ENCODE measurements at regions of chr12 and their contacts with region 1.

Region 1: GRCh38 chr12:56117778-56118687 is at the start of gene ZC3H10:
- DNase-seq: peak; percentile 99
- H3K4me3 Mint-ChIP-seq: peak within 1 kb of the TSS; percentile 99
- H3K27ac Mint-ChIP-seq: peak within 1 kb of the TSS; percentile 100
- H3K4me1 Mint-ChIP-seq: peaks cover 29% of the 10 kb centered on the region
- H3K27me3 Mint-ChIP-seq: no peaks in the 10 kb centered on the region
- total RNA-seq, gene ZC3H10: 5.1 to 7.2 TPM

Region 2: DNA sequence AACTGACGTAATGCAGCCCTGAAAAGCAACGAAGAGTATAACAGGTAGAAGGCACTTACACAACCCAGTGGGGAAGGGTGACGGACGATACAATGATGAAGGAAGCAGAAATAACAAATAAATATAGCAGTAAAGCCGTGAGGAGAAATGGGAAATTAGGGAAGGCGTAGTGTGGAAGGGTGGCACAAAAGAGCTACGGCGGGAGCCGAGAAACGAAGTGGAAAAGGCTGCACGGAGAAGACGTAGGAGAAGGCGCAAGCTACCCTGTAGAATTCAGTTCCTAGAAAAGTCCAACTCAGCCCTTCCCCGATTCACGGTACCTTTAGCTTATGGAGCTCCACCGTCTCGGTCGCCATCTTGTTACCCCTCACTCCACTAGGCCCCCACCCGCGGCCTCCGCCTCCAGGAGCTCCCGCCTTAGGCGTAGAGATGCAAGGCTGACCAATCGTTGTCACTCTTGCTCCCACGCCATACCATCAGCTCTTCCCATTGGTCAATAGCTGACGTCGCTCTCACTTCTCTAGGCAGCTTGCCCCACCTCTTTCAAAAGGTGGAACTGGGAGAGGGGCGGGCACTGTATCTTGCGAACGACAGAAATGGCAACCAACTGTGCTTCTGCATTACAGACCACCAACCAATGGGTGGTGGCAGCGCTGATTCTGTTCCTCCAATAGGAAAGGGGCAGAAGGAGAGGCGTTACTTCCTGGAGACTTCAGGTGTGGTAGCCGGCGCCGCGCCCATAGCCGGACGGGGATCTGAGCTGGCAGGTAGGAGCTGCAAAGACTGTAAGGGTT is 300.5 kb before region 1 on chr12 and contains the starts of genes ORMDL2 and SARNP:
- CTCF ChIA-PET with region 1: no interaction called
- POLR2A ChIA-PET with region 1: interaction called, 4 read pairs
- intact Hi-C with region 1: loop called (anchors 5 kb)
- DNase-seq: peak; percentile 99
- H3K4me3 Mint-ChIP-seq: no peak within 1 kb of the TSS
- H3K27ac Mint-ChIP-seq: no peak within 1 kb of the TSS
- H3K4me1 Mint-ChIP-seq: peaks cover 49% of the 10 kb centered on the region
- H3K27me3 Mint-ChIP-seq: no peaks in the 10 kb centered on the region
- total RNA-seq, gene ORMDL2: 37.9 to 41.2 TPM
- total RNA-seq, gene SARNP: 104 to 110 TPM

Region 3: GRCh38 chr12:55842681-55843429 is 275.2 kb before region 1 on chr12 and contains the start of gene MMP19:
- CTCF ChIA-PET with region 1: no interaction called
- POLR2A ChIA-PET with region 1: no interaction called
- intact Hi-C with region 1: no loop called
- DNase-seq: no peak
- H3K4me3 Mint-ChIP-seq: no peak within 1 kb of the TSS
- H3K27ac Mint-ChIP-seq: no peak within 1 kb of the TSS
- H3K4me1 Mint-ChIP-seq: peaks cover 11% of the 10 kb centered on the region
- H3K27me3 Mint-ChIP-seq: no peaks in the 10 kb centered on the region
- total RNA-seq, gene MMP19: 0.31 TPM in 1 of 2 experiments, not detected in the other

Region 4: GRCh38 chr12:55946553-55946952 is 171.5 kb before region 1 on chr12:
- CTCF ChIA-PET with region 1: no interaction called
- POLR2A ChIA-PET with region 1: no interaction called
- intact Hi-C with region 1: no loop called
- DNase-seq: no peak
- H3K4me3 Mint-ChIP-seq: no peak overlapping the region
- H3K27ac Mint-ChIP-seq: peak overlapping the region; percentile 75
- H3K4me1 Mint-ChIP-seq: peaks cover 43% of the 10 kb centered on the region
- H3K27me3 Mint-ChIP-seq: no peaks in the 10 kb centered on the region

Region 5: GRCh38 chr12:56078990-56079664 is 38.9 kb before region 1 on chr12:
- CTCF ChIA-PET with region 1: interaction called, 7 read pairs
- POLR2A ChIA-PET with region 1: interaction called, 4 read pairs
- intact Hi-C with region 1: loop called (anchors 2 kb)
- DNase-seq: peak; percentile 74
- H3K4me3 Mint-ChIP-seq: peak overlapping the region; percentile 74
- H3K27ac Mint-ChIP-seq: no peak overlapping the region
- H3K4me1 Mint-ChIP-seq: peaks cover 5% of the 10 kb centered on the region
- H3K27me3 Mint-ChIP-seq: peaks cover 7% of the 10 kb centered on the region

Region 6: GRCh38 chr12:56158029-56158925 is 40.2 kb after region 1 on chr12 and contains the start of gene MYL6:
- CTCF ChIA-PET with region 1: interaction called, 14 read pairs
- POLR2A ChIA-PET with region 1: interaction called, 16 read pairs
- intact Hi-C with region 1: loop called (anchors 1 kb)
- DNase-seq: peak; percentile 95
- H3K4me3 Mint-ChIP-seq: peak within 1 kb of the TSS; percentile 95
- H3K27ac Mint-ChIP-seq: peak within 1 kb of the TSS; percentile 98
- H3K4me1 Mint-ChIP-seq: peaks cover 42% of the 10 kb centered on the region
- H3K27me3 Mint-ChIP-seq: no peaks in the 10 kb centered on the region
- total RNA-seq, gene MYL6: 1,196 to 1,215 TPM

Region 7: GRCh38 chr12:56299853-56300643 is 182.0 kb after region 1 on chr12 and contains the start of gene CS:
- CTCF ChIA-PET with region 1: interaction called, 3 read pairs
- POLR2A ChIA-PET with region 1: interaction called, 3 read pairs
- intact Hi-C with region 1: loop called (anchors 1 kb)
- DNase-seq: peak; percentile 99
- H3K4me3 Mint-ChIP-seq: peak within 1 kb of the TSS; percentile 98
- H3K27ac Mint-ChIP-seq: peak within 1 kb of the TSS; percentile 98
- H3K4me1 Mint-ChIP-seq: peaks cover 46% of the 10 kb centered on the region
- H3K27me3 Mint-ChIP-seq: no peaks in the 10 kb centered on the region
- total RNA-seq, gene CS: 304 to 309 TPM

Region 8: GRCh38 chr12:56468216-56469006 is 350.4 kb after region 1 on chr12 and contains the start of gene SPRYD4:
- CTCF ChIA-PET with region 1: interaction called, 6 read pairs
- POLR2A ChIA-PET with region 1: interaction called, 4 read pairs
- intact Hi-C with region 1: loop called (anchors 2 kb)
- DNase-seq: peak; percentile 96
- H3K4me3 Mint-ChIP-seq: peak within 1 kb of the TSS; percentile 93
- H3K27ac Mint-ChIP-seq: peak within 1 kb of the TSS; percentile 96
- H3K4me1 Mint-ChIP-seq: peaks cover 31% of the 10 kb centered on the region
- H3K27me3 Mint-ChIP-seq: no peaks in the 10 kb centered on the region
- total RNA-seq, gene SPRYD4: 2.4 to 2.9 TPM

Measured in activated CD4-positive, alpha-beta memory T cell treated with anti-CD3 and anti-CD28 coated beads for 36 hours (primary cell).